Activated naive CD4-positive, alpha-beta T cell treated with anti-CD3 and anti-CD28 coated beads for 36 hours (primary cell): ENCODE measurements at regions of chr15 and their contacts with region 1.

Region 1: GRCh38 chr15:98599909-98600691 is 48.2 kb upstream of the IGF1R start:
- DNase-seq: peak; percentile 70
- H3K4me3 Mint-ChIP-seq: peak overlapping the region; percentile 94
- H3K27ac Mint-ChIP-seq: peak overlapping the region; percentile 97
- H3K4me1 Mint-ChIP-seq: peaks cover 20% of the 10 kb centered on the region
- H3K27me3 Mint-ChIP-seq: no peaks in the 10 kb centered on the region

Region 2: DNA sequence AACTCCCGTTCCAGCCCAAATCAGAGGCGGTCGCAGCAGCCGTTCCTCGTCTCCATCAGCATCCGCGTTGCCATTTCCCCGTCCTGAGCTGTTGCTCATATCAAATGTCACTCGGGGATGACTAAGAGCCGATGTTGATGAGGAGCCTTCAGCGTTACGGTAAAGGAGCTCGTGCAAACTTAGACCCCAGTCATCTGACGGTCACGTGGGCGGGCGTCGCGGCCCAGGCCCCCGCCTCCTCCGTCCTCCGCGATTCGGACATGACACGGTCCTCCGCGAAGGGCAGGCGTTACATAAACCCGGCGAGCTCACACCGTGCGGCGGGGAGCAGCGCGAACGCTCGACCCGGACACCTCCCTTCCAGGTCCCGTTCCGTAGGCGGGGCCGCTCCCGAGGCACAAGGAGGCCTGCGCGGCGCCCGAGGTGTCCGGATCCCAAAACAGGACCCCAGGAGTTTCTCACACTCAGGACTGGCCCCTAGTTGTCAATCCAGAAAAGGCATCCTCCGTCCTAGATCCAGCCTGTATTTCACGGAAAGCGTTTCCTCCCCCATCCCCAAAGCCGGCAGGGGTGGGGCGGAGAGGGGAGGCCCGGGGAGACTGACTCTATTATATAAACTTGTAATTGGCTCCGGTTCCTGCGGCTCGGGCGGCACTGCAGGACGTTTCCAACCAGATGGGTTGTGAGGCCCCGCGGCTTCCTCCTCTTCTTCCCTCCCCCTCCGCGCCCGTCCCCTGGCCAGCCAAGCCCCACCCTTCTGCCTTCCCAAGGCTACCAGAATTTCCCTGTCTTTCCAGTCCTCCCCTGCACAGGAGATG is 51.7 kb before region 1 on chr15:
- CTCF ChIA-PET with region 1: no interaction called
- intact Hi-C with region 1: loop called (anchors 1 kb)
- DNase-seq: peak; percentile 83
- H3K4me3 Mint-ChIP-seq: peak overlapping the region; percentile 90
- H3K27ac Mint-ChIP-seq: peak overlapping the region; percentile 83
- H3K4me1 Mint-ChIP-seq: peaks cover 16% of the 10 kb centered on the region
- H3K27me3 Mint-ChIP-seq: peaks cover 28% of the 10 kb centered on the region